ENCODE measurements at regions of chr1 and their contacts with region 1.

Region 1: GRCh38 chr1:192978195-192978710 is 80.9 kb downstream of the UCHL5 start:
- DNase-seq: no peak
- H3K4me3 ChIP-seq: no peak overlapping the region
- H3K27ac ChIP-seq: no peak overlapping the region
- H3K4me1 ChIP-seq: no peaks in the 10 kb centered on the region
- H3K27me3 ChIP-seq: no peaks in the 10 kb centered on the region
- CTCF ChIP-seq: no peak

Region 2: GRCh38 chr1:192284927-192285326 is 693.3 kb before region 1 on chr1:
- CTCF ChIA-PET with region 1: no interaction called
- POLR2A ChIA-PET with region 1: no interaction called
- intact Hi-C with region 1: no loop called
- DNase-seq: no peak
- H3K4me3 ChIP-seq: no peak overlapping the region
- H3K27ac ChIP-seq: no peak overlapping the region
- H3K4me1 ChIP-seq: no peaks in the 10 kb centered on the region
- H3K27me3 ChIP-seq: no peaks in the 10 kb centered on the region
- CTCF ChIP-seq: no peak

Region 3: DNA sequence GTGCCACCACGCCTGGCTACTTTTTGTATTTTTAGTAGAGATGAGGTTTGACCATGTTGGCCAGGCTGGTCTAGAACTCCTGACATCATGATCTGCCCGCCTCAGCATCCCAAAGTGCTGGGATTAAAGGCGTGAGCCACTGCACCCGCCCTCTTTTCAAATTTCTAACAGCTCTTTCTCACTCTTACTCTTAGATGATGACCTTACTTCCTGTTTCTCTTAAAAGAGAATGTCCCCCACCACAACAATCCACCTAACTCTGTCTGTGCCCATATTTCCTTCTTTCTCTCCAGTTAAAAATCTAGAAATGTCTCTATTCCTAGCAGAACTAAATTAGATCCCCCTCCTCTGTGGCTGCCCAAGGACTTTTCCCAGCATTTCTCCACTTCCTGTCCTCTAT is 216.0 kb before region 1 on chr1:
- CTCF ChIA-PET with region 1: no interaction called
- POLR2A ChIA-PET with region 1: interaction called, 13 read pairs
- intact Hi-C with region 1: no loop called
- DNase-seq: no peak
- H3K4me3 ChIP-seq: no peak overlapping the region
- H3K27ac ChIP-seq: no peak overlapping the region
- H3K4me1 ChIP-seq: peaks cover 6% of the 10 kb centered on the region; the same call in 1 of the 2 replicates
- H3K27me3 ChIP-seq: no peaks in the 10 kb centered on the region
- CTCF ChIP-seq: no peak

Region 4: DNA sequence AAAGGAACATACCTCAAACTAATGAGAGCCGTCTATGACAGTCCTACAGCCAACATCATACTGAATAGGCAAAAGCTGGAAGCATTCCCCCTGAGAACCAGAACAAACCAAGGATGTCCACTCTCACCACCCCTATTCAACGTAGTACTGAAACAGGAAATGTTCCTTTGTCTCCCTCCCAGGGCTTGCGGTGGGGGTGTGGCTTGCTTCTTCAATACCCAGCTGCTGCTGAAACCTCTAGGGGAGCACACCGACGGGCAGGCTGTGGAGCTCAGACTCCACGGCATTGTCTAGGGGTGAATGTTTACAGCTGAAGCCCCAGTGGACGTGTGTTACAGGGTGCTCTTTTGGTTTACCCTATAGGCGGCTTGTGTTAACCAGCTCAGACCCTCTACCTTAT is 238.7 kb after region 1 on chr1:
- CTCF ChIA-PET with region 1: no interaction called
- POLR2A ChIA-PET with region 1: no interaction called
- intact Hi-C with region 1: no loop called
- DNase-seq: no peak
- H3K4me3 ChIP-seq: no peak overlapping the region
- H3K27ac ChIP-seq: no peak overlapping the region
- H3K4me1 ChIP-seq: peaks cover 1% of the 10 kb centered on the region; the same call in 1 of the 2 replicates
- H3K27me3 ChIP-seq: no peaks in the 10 kb centered on the region
- CTCF ChIP-seq: no peak

Region 5: DNA sequence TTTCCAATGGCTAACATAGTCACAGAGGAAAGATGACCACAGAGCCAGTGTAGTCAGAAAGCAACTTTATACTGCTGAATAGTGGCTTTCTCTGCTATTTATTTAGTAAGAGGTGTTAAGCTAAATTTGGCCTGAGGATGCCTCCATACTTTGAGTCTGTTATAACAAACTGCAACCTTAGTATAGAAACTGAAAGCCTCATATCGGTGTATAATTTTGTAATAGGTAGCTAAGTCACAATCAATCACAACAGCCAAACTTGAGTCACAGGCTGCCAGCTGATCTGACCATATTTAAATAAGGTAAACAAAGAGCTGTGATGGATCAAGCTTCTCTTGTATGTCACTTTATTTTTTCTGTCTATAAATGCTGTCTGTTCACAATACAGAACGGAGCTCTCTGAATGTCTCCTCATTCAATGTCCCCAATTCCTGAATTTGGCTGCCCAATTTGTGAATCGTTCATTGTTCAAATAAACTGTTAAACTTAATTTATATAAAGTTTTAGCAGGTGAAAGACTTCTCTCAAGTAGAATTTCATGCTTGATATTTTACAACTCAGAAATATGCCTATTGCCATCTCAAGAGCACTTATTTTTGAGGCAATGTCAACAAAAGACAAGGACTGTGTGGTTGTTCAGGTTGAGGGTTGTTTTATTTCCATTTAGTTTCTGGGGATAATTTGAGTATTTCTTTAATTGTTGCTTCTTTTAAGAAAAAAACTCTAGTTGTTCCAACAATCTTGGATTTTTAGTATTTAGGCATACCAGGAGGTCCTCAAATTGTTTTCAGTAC is 547.9 kb after region 1 on chr1:
- CTCF ChIA-PET with region 1: no interaction called
- POLR2A ChIA-PET with region 1: no interaction called
- intact Hi-C with region 1: no loop called
- DNase-seq: no peak
- H3K4me3 ChIP-seq: no peak overlapping the region
- H3K27ac ChIP-seq: no peak overlapping the region
- H3K4me1 ChIP-seq: no peaks in the 10 kb centered on the region
- H3K27me3 ChIP-seq: no peaks in the 10 kb centered on the region
- CTCF ChIP-seq: no peak